ENCODE measurements at regions of chr2 and their contacts with region 1.

Region 1: DNA sequence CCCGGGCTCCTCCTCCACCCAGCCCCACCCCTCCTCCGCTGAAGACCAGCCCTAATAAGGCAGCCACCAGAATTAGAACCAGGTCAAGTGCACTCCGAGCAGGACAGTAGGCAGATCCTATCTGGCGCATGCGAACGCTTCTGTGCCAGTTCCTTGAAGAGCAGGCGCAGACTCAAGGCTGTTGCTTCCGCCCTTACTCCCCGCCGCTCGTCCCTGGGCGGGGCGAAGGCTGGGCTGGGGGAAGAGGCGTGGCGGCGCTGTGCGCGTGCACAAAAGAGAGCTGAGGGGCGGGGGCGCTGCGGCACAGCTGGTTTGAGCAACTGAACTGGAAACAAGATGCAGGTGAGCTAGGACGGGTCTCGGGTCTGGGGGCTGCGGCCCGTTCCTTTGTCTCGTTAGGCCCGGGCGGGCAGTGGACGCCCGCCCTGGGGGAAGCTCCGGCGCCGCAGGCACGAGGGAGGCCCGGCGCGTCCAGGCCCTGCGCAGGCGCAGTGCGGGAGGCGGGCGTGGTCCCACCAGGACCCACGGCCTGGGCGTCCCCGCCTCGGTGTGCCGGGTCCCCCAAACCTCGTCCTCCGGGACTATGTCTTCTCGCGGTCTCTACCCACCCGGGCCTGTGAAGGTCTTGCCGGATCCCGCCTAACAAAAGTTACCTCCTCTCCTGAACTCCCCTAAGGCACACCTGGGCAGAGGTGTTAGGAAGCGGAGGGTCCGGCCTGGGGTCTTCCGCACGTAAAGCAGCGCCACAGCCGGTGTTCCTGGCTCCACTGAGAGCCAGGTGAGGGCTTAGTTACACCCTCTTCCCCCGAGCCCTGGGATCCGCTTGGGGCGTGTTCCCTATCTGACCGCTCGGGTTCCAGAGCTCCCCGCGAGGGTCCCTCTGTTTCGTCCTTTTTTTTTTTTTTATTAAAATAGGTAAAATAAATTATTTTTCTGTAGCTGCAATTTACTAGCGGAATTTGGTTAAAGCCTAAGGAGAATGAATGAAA is at the start of gene PDCL3:
- DNase-seq: peak; percentile 99
- ATAC-seq: peak; percentile 96
- H3K4me3 Mint-ChIP-seq: peak within 1 kb of the TSS; percentile 98
- H3K27ac Mint-ChIP-seq: peak within 1 kb of the TSS; percentile 99
- H3K4me1 Mint-ChIP-seq: peaks cover 31% of the 10 kb centered on the region
- H3K27me3 Mint-ChIP-seq: no peaks in the 10 kb centered on the region
- total RNA-seq, gene PDCL3: 22.0 to 24.4 TPM

Region 2: DNA sequence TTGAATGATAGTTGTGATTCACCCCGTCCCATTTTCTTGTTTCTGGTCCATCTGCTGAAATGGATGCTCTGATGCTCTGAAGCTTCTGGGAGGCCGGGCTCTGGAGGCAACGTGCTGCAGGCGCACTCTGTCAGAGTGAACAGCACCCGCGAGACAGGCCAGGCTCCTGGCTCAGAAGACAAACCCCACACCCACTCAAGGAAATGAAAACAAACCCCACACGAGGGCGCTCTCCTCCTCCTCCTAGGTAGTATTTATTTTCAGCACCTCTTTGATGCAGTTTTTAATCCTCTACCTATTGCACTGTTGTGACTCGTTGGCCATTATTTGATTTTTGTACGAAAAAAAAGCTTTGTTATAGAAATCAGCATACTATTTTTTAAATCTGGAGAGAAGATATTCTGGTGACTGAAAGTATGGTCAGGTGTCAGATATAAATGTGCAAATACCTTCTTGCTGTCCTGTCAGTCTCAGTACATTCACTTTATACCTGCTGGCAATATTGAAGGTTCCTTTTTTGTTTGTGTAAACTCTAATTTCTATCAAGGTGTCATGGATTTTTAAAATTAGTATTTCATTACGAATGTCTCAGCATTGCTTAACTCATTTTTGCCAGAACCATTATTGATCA is 135.3 kb before region 1 on chr2:
- POLR2A ChIA-PET with region 1: no interaction called
- DNase-seq: peak; percentile 58
- ATAC-seq: peak; percentile 88
- H3K4me3 Mint-ChIP-seq: no peak overlapping the region
- H3K27ac Mint-ChIP-seq: no peak overlapping the region
- H3K4me1 Mint-ChIP-seq: peaks cover 3% of the 10 kb centered on the region
- H3K27me3 Mint-ChIP-seq: peaks cover 14% of the 10 kb centered on the region

Region 3: GRCh38 chr2:100541404-100541803 is 21.6 kb before region 1 on chr2:
- POLR2A ChIA-PET with region 1: no interaction called
- DNase-seq: no peak
- ATAC-seq: no peak
- H3K4me3 Mint-ChIP-seq: no peak overlapping the region
- H3K27ac Mint-ChIP-seq: no peak overlapping the region
- H3K4me1 Mint-ChIP-seq: peaks cover 7% of the 10 kb centered on the region
- H3K27me3 Mint-ChIP-seq: no peaks in the 10 kb centered on the region

Region 4: GRCh38 chr2:100580367-100581276 is 17.6 kb after region 1 on chr2:
- POLR2A ChIA-PET with region 1: interaction called, 153 read pairs
- DNase-seq: peak; percentile 67
- ATAC-seq: peak; percentile 88
- H3K4me3 Mint-ChIP-seq: peak overlapping the region; percentile 41
- H3K27ac Mint-ChIP-seq: peak overlapping the region; percentile 98
- H3K4me1 Mint-ChIP-seq: peaks cover 43% of the 10 kb centered on the region
- H3K27me3 Mint-ChIP-seq: no peaks in the 10 kb centered on the region

Region 5: GRCh38 chr2:100588071-100588786 is 25.2 kb after region 1 on chr2:
- POLR2A ChIA-PET with region 1: interaction called, 153 read pairs
- DNase-seq: no peak
- ATAC-seq: peak; percentile 91
- H3K4me3 Mint-ChIP-seq: peak overlapping the region; percentile 31
- H3K27ac Mint-ChIP-seq: peak overlapping the region; percentile 28
- H3K4me1 Mint-ChIP-seq: peaks cover 27% of the 10 kb centered on the region
- H3K27me3 Mint-ChIP-seq: no peaks in the 10 kb centered on the region

Region 6: GRCh38 chr2:100615471-100615870 is 52.4 kb after region 1 on chr2:
- POLR2A ChIA-PET with region 1: no interaction called
- DNase-seq: no peak
- ATAC-seq: no peak
- H3K4me3 Mint-ChIP-seq: no peak overlapping the region
- H3K27ac Mint-ChIP-seq: no peak overlapping the region
- H3K4me1 Mint-ChIP-seq: peaks cover 3% of the 10 kb centered on the region
- H3K27me3 Mint-ChIP-seq: peaks cover 6% of the 10 kb centered on the region

Region 7: DNA sequence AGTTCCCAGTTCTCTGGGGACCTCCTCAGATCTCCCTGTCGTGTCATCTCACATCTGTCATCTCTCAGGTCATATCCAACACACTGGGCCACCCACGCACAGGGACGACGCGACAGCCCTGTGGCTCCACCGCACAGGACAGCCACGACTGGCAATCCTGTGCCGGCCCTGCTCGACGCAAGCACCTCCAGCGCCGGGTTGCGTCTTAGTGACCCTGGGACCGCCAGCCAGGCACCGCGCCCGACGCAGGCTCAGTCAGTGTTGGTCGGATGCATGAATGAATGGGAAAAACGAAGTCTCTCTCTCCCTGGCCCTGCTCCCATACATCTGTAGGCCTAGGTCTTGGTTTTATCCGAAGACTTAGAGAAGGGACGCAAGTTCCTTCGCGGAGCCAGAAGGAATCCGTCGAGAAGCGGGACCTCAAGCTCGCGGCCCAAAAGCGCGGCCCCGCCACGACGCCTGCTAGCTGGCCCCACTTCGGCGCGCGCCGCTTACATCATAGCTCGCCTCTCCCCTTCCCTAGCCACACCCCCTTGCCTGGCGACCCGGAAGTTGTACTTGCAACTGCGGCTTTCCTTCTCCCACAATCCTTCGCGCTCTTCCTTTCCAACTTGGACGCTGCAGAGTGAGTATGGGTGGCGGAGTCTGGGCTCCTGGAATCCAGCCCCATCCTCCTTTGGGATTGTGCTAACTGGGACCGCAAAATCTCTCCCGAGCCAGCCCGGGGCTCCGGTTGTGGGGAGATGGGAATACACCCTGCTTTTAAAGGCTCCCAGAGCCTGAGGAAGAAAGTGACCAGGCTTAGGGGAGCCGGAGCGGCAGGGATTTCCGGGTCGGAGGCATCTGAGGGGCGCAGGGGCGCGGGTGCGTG is 438.9 kb after region 1 on chr2 and contains the start of gene RPL31:
- POLR2A ChIA-PET with region 1: interaction called, 17 read pairs
- DNase-seq: peak; percentile 93
- ATAC-seq: peak; percentile 92
- H3K4me3 Mint-ChIP-seq: peak within 1 kb of the TSS; percentile 98
- H3K27ac Mint-ChIP-seq: peak within 1 kb of the TSS; percentile 97
- H3K4me1 Mint-ChIP-seq: peaks cover 37% of the 10 kb centered on the region
- H3K27me3 Mint-ChIP-seq: no peaks in the 10 kb centered on the region
- total RNA-seq, gene RPL31: 1,575 to 1,632 TPM

Measured in activated naive CD8-positive, alpha-beta T cell treated with anti-CD3 and anti-CD28 coated beads, Interleukin-2, amount 10 ng/mL, durations not matched to agents 7 days and 5 days (primary cell).